CD4-positive, alpha-beta memory T cell (primary cell): ENCODE measurements at regions of chr1 and their contacts with region 1.

Region 1: DNA sequence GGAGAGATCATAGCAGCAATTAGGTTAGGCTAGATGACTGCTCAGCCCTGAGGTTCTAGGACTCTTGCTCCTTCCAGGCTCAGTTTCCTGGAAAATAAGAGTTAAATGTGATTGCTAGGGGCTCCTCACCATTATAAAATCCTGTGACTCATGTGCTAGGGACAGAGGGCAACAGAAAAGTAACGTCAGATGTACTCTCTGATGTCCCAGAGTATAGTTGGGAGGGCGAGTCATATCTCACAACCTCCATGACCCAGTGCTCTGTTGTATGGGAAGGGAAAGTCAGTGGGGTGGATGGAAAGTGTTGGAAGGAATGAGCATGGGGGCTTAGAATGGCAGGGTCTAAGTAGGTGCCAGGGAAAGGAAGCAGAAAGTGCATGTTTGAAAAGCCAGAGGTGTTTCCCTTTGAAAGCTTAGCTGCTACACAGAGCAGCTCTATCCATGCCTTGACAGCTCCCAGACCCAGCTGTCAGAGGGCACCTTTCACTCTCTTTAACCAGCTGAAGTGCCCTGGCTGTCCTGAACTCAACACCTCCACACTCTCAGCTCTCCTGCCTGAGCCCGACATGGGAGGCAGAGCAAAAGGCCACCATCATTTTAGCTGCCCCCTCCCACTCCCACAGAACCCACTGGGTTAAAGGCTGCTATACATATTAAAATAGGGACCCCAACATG is 11.6 kb downstream of the GJA5 start:
- DNase-seq: no peak
- H3K4me3 ChIP-seq: no peak overlapping the region
- H3K4me3 Mint-ChIP-seq: no peak overlapping the region
- H3K27ac ChIP-seq: no peak overlapping the region
- H3K27ac Mint-ChIP-seq: no peak overlapping the region
- H3K4me1 ChIP-seq: no peaks in the 10 kb centered on the region
- H3K4me1 Mint-ChIP-seq: no peaks in the 10 kb centered on the region
- H3K27me3 ChIP-seq: no peaks in the 10 kb centered on the region
- H3K27me3 Mint-ChIP-seq: peaks cover 0 to 5% of the 10 kb centered on the region in 2 donors

Region 2: DNA sequence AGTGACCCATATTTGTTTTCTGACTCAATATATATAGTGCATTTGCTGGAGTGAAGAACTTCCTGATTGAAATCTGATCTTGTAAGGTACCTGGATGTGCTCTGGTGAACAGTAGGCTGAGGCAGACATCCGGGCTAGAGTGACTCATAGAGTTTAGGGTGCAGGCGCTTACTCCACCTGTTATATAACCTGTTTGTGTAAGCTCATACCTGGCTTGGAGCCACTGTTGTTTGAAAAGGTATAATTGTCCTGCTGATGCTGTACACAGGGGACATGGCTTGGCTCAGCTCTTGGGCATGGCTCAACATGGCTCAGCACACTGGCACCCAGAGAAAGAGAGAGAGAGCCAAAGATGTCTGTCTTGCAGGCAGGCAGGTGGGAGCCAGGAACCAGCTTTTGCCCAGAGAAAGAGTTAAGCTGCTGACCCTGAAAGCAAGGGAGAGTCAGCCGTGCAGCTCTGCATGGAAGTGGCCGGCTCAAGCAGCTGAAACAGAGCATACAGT is 31.7 kb before region 1 on chr1:
- CTCF ChIA-PET with region 1: no interaction called
- POLR2A ChIA-PET with region 1: no interaction called
- intact Hi-C with region 1: loop called (anchors 1 kb)
- DNase-seq: peak; percentile 27 to 87 (median 56)
- H3K4me3 ChIP-seq: no peak overlapping the region
- H3K4me3 Mint-ChIP-seq: peak overlapping the region in 7 of 8 donors; percentile 55 to 88 (median 74)
- H3K27ac ChIP-seq: no peak overlapping the region
- H3K27ac Mint-ChIP-seq: peak overlapping the region; percentile 88 to 94 (median 91)
- H3K4me1 ChIP-seq: peaks cover 16% of the 10 kb centered on the region
- H3K4me1 Mint-ChIP-seq: peaks cover 5 to 24% (median 18%) of the 10 kb centered on the region in 4 donors
- H3K27me3 ChIP-seq: no peaks in the 10 kb centered on the region
- H3K27me3 Mint-ChIP-seq: peaks cover 10 to 21% of the 10 kb centered on the region in 2 donors